Ascending aorta (tissue), 2 donors: ENCODE measurements at regions of chr13 and their contacts with region 1.

Region 1: GRCh38 chr13:52599848-52600603 is 42.2 kb upstream of the HNRNPA1L2 start:
- DNase-seq: no peak
- H3K4me3 ChIP-seq: peak overlapping the region; percentile 80 to 92
- H3K27ac ChIP-seq: peak overlapping the region; percentile 70 to 91
- H3K4me1 ChIP-seq: peaks cover 0 to 7% of the 10 kb centered on the region in 2 donors
- H3K27me3 ChIP-seq: no peaks in the 10 kb centered on the region
- CTCF ChIP-seq: peak in 1 of 3 experiments; percentile 7

Region 2: GRCh38 chr13:52652196-52652979 is 52.4 kb after region 1 on chr13 and contains the start of gene SUGT1:
- intact Hi-C with region 1: loop called (anchors 1 kb)
- DNase-seq: peak; percentile 88 to 98
- H3K4me3 ChIP-seq: peak within 1 kb of the TSS; percentile 83 to 96
- H3K27ac ChIP-seq: peak within 1 kb of the TSS; percentile 95 to 97
- H3K4me1 ChIP-seq: peaks cover 4 to 29% of the 10 kb centered on the region in 2 donors
- H3K27me3 ChIP-seq: no peaks in the 10 kb centered on the region
- CTCF ChIP-seq: peak; percentile 52 to 80 (median 73)
- total RNA-seq, gene SUGT1: 8.8 TPM

Region 3: DNA sequence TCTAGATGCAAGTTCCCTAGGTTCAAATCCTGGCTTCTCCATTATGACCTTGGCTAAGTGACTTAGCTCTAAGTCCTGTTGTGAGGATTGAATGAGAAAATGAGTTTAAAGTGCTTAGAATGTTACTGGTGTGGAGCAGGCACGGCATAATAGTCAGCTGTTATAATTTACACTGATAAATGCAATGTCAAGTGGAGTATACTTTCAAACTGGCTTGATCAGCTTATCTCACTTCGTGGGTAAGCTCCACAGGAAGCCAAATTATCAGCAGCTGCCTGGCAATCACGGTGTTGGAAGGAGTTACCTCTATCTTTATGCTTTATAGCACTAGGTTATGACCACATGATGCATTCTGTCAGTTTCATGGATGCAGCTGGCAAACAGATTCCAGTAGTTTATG is 701.4 kb after region 1 on chr13:
- intact Hi-C with region 1: no loop called
- DNase-seq: no peak
- H3K4me3 ChIP-seq: no peak overlapping the region
- H3K27ac ChIP-seq: no peak overlapping the region
- H3K4me1 ChIP-seq: no peaks in the 10 kb centered on the region
- H3K27me3 ChIP-seq: no peaks in the 10 kb centered on the region
- CTCF ChIP-seq: no peak